Activated B cell treated with CpG ODN at 0.5 μM for 24 hours (primary cell): ENCODE measurements at regions of chr12 and their contacts with region 1.

Region 1: GRCh38 chr12:75641031-75641780 is 129.8 kb upstream of the KRR1 start:
- DNase-seq: no peak
- ATAC-seq: peak; percentile 96
- H3K4me3 Mint-ChIP-seq: peak overlapping the region; percentile 26
- H3K27ac Mint-ChIP-seq: peak overlapping the region; percentile 51
- H3K4me1 Mint-ChIP-seq: peaks cover 33% of the 10 kb centered on the region
- H3K27me3 Mint-ChIP-seq: peaks cover under 1% of the 10 kb centered on the region
- CTCF ChIP-seq: no peak

Region 2: DNA sequence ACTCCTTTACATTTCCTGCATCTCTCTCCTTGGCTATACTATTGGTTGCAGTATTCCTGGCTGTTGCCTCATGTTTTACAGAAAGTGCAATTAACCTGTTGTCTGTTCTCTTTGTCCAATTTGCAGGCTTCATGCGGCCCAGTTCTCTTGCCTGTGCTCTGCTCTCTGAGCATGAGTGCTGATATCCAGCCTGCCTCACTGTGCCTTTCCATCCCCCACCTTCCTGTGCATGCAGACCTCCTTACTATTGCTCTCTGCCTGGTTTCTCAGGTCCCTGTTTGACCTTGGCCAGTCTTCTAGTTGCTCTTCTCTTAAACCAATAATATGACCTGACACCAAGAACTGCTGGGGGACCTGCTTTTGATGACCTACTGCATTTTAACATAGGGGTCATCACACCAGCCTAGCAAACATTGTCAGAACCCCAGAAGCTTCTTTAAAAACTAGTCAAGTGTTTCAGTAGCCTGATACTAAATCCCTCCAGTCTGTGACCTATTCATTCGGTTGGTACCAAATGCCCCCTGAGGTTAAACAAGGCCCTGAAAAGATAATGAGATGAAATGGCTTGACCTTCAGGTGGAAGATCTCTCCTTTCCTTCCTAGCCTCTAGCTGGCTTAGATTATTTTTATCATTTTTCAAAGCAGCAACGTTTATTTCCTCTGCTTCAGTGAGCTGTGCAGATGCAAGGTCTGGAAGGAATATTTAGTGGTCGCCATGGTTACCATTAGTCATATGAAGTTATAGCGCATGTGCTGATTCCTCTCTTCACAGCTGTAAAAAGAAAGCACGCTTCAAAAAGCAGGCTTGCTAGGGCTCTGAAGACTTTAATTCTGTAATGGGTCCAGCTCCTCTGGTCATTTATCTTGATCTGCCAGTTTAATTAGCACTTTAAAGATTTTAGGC is 173.9 kb after region 1 on chr12:
- CTCF ChIA-PET with region 1: no interaction called
- POLR2A ChIA-PET with region 1: no interaction called
- intact Hi-C with region 1: loop called (anchors 5 kb)
- DNase-seq: no peak
- ATAC-seq: peak; percentile 82
- H3K4me3 Mint-ChIP-seq: no peak overlapping the region
- H3K27ac Mint-ChIP-seq: no peak overlapping the region
- H3K4me1 Mint-ChIP-seq: peaks cover 13% of the 10 kb centered on the region
- H3K27me3 Mint-ChIP-seq: no peaks in the 10 kb centered on the region
- CTCF ChIP-seq: no peak

Region 3: DNA sequence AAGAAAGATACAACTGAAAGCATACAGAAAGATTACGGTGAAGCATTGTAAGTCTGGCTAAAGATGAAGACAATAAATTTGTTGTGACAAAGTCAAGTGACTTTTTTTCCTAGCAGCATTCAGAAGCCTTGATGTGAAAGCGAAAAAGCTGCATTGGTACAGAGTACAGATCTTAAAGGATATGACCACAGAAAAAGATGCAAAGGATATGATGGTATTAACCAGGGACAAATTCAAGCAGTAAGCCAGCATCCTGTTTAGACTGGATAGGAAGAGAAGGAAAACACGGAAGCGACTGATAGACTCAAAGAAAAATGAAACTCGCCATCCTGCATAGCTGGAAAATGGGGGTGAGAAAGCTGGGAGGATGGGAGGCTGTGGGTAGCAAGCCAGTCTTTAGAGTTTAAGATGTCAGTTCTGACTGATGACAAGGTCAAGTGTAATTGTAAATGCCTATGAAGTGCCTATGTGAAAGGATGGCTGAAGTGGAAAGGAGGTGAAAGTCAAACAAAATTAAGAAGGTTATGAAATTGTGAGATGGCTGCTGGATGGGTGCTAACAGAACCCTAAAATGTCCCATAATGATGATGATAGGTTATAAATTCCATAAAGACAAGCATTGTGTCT is 297.9 kb after region 1 on chr12:
- CTCF ChIA-PET with region 1: no interaction called
- POLR2A ChIA-PET with region 1: no interaction called
- intact Hi-C with region 1: loop called (anchors 5 kb)
- DNase-seq: no peak
- ATAC-seq: no peak
- H3K4me3 Mint-ChIP-seq: no peak overlapping the region
- H3K27ac Mint-ChIP-seq: no peak overlapping the region
- H3K4me1 Mint-ChIP-seq: peaks cover 12% of the 10 kb centered on the region
- H3K27me3 Mint-ChIP-seq: peaks cover 4% of the 10 kb centered on the region
- CTCF ChIP-seq: no peak